AG04449 (cell line): ENCODE measurements at regions of chr1 and their contacts with region 1.

Region 1: GRCh38 chr1:206507284-206508129 is at the start of gene RASSF5:
- DNase-seq: no peak
- H3K4me3 ChIP-seq: peak within 1 kb of the TSS; percentile 61
- CTCF ChIP-seq: no peak

Region 2: DNA sequence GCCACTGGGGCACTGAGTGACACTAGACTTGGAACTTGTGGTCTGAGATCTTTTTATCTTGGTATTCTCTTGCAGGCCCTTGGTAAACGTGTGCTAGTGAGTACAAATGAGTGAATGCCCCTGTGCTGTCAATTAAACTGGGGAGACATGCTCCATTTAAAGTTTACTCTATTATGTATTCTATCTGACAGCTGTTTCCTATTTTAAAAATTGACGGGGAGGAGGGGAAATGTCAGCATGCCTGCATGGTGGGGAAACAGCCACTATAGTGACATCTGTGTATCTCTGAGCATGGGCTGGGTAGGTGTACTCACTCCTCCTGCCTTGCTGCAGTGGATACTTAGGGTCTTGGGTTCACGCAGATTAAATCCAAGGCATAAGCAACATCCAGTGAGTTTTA is 96.2 kb before region 1 on chr1:
- CTCF ChIA-PET with region 1: no interaction called
- POLR2A ChIA-PET with region 1: no interaction called
- DNase-seq: no peak
- H3K4me3 ChIP-seq: no peak overlapping the region
- CTCF ChIP-seq: no peak

Region 3: GRCh38 chr1:206496131-206496793 is 11.2 kb before region 1 on chr1:
- CTCF ChIA-PET with region 1: interaction called, 148 read pairs
- POLR2A ChIA-PET with region 1: interaction called, 3 read pairs
- DNase-seq: no peak
- H3K4me3 ChIP-seq: no peak overlapping the region
- CTCF ChIP-seq: no peak